ENCODE measurements at regions of chr1 and their contacts with region 1.

Region 1: GRCh38 chr1:64136752-64137411 is 66.5 kb upstream of the UBE2U start:
- DNase-seq: peak; percentile 68 to 96 (median 75)
- H3K4me3 ChIP-seq: no peak overlapping the region
- H3K27ac ChIP-seq: peak overlapping the region in 5 of 59 donors; percentile 17 to 64 (median 21)
- H3K27me3 ChIP-seq: no peaks in the 10 kb centered on the region
- CTCF ChIP-seq: peak; percentile 73 to 98 (median 93)

Region 2: GRCh38 chr1:63615768-63616420 is 521.0 kb before region 1 on chr1:
- intact Hi-C with region 1: loop called in 1 of 2 experiments (anchors 10 kb)
- DNase-seq: peak in 5 of 10 donors; percentile 22 to 63 (median 37)
- H3K4me3 ChIP-seq: no peak overlapping the region
- H3K27ac ChIP-seq: no peak overlapping the region
- H3K27me3 ChIP-seq: no peaks in the 10 kb centered on the region
- CTCF ChIP-seq: peak; percentile 70 to 96 (median 90)

Region 3: GRCh38 chr1:63691701-63692425 is 445.0 kb before region 1 on chr1:
- intact Hi-C with region 1: loop called in 1 of 2 experiments (anchors 10 kb)
- DNase-seq: peak in 4 of 10 donors; percentile 12 to 66 (median 47)
- H3K4me3 ChIP-seq: no peak overlapping the region
- H3K27ac ChIP-seq: peak overlapping the region in 48 of 59 donors; percentile 5 to 79 (median 48)
- H3K27me3 ChIP-seq: no peaks in the 10 kb centered on the region
- CTCF ChIP-seq: peak; percentile 43 to 88 (median 79)

Region 4: GRCh38 chr1:63935143-63935542 is 201.7 kb before region 1 on chr1:
- intact Hi-C with region 1: loop called in 1 of 2 experiments (anchors 10 kb)
- DNase-seq: peak in 2 of 10 donors; percentile 33 to 55
- H3K4me3 ChIP-seq: no peak overlapping the region
- H3K27ac ChIP-seq: no peak overlapping the region
- H3K27me3 ChIP-seq: no peaks in the 10 kb centered on the region
- CTCF ChIP-seq: peak in 32 of 56 donors; percentile 11 to 52 (median 34)

Region 5: GRCh38 chr1:64092851-64093371 is 44.0 kb before region 1 on chr1:
- intact Hi-C with region 1: loop called in 1 of 2 experiments (anchors 5 kb)
- DNase-seq: peak in 2 of 10 donors; percentile 54 to 55
- H3K4me3 ChIP-seq: no peak overlapping the region
- H3K27ac ChIP-seq: peak overlapping the region; percentile 59 to 98 (median 88)
- H3K27me3 ChIP-seq: no peaks in the 10 kb centered on the region
- CTCF ChIP-seq: no peak

Region 6: DNA sequence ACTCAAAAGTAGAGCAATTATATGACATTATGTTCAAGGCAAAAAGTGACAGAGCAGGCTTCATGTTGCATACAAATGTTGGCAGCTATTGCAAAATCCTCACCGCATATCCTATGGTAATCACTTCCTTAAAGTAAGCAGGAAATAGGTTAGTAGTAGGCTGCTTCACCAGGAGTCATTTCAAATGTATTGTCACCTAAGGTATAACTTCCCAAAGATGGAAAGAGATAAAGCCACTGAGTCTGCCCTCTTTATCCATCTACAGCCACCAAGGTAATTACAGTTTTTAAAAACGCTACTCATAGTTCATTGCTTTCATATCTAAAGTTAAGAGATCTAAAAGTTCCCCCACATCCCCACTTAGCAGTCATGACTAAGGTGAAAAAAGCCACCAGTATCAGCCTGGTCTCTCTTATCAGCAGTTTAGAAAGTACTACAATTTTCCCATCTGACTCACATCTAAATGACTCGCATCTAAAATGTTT is 35.0 kb after region 1 on chr1:
- intact Hi-C with region 1: no loop called
- DNase-seq: no peak
- H3K4me3 ChIP-seq: no peak overlapping the region
- H3K27ac ChIP-seq: no peak overlapping the region
- H3K27me3 ChIP-seq: no peaks in the 10 kb centered on the region
- CTCF ChIP-seq: no peak